Natural killer cell (primary cell): ENCODE measurements at regions of chr15 and their contacts with region 1.

Region 1: GRCh38 chr15:20409247-20409646 is 132.4 kb downstream of the GOLGA6L6 start:
- DNase-seq: no peak
- ATAC-seq: peak in 1 of 3 donors; percentile 35
- H3K4me3 ChIP-seq: no peak overlapping the region
- H3K4me3 Mint-ChIP-seq: no peak overlapping the region
- H3K27ac ChIP-seq: no peak overlapping the region
- H3K27ac Mint-ChIP-seq: no peak overlapping the region
- H3K4me1 ChIP-seq: no peaks in the 10 kb centered on the region
- H3K4me1 Mint-ChIP-seq: no peaks in the 10 kb centered on the region
- H3K27me3 ChIP-seq: no peaks in the 10 kb centered on the region
- H3K27me3 Mint-ChIP-seq: peaks cover 0 to under 1% of the 10 kb centered on the region in 2 donors
- CTCF ChIP-seq: no peak

Region 2: DNA sequence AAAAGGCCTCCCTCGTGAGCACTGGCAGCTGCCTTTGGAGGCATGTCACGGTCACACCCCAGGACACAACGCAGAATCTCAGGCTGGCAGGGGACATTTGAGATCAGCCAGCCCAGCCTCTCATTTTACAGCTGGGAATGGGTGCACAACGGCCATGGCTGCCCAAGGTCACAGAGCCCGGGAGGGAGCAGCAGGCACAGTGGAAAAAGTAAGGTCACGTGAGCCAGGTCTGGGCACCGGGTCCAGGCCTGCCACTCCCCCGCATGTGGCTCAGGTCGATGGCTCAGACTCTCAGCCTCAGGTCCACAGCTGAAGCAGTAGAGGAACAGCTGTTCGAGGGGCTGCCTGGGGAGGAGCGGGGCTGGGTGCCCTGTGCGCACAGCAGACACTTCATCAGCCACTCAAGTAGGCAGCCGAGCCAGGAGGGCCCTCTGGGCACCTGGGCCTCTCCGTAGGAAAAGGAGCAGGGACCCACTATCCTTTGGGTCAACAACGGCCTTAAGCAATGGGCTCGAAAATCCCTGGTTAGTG is 128.2 kb before region 1 on chr15:
- intact Hi-C with region 1: loop called (anchors 5 kb)
- DNase-seq: peak in 1 of 2 donors; percentile 25
- ATAC-seq: peak in 1 of 3 donors; percentile 22
- H3K4me3 ChIP-seq: no peak overlapping the region
- H3K4me3 Mint-ChIP-seq: no peak overlapping the region
- H3K27ac ChIP-seq: no peak overlapping the region
- H3K27ac Mint-ChIP-seq: no peak overlapping the region
- H3K4me1 ChIP-seq: no peaks in the 10 kb centered on the region
- H3K4me1 Mint-ChIP-seq: no peaks in the 10 kb centered on the region
- H3K27me3 ChIP-seq: no peaks in the 10 kb centered on the region
- H3K27me3 Mint-ChIP-seq: no peaks in the 10 kb centered on the region
- CTCF ChIP-seq: no peak

Region 3: GRCh38 chr15:20340931-20341661 is 68.2 kb before region 1 on chr15:
- intact Hi-C with region 1: loop called (anchors 10 kb)
- DNase-seq: peak; percentile 38 to 77
- ATAC-seq: peak in 2 of 3 donors; percentile 12 to 35
- H3K4me3 ChIP-seq: no peak overlapping the region
- H3K4me3 Mint-ChIP-seq: no peak overlapping the region
- H3K27ac ChIP-seq: no peak overlapping the region
- H3K27ac Mint-ChIP-seq: no peak overlapping the region
- H3K4me1 ChIP-seq: no peaks in the 10 kb centered on the region
- H3K4me1 Mint-ChIP-seq: no peaks in the 10 kb centered on the region
- H3K27me3 ChIP-seq: no peaks in the 10 kb centered on the region
- H3K27me3 Mint-ChIP-seq: no peaks in the 10 kb centered on the region
- CTCF ChIP-seq: no peak

Region 4: GRCh38 chr15:20361091-20361490 is 48.2 kb before region 1 on chr15:
- intact Hi-C with region 1: no loop called
- DNase-seq: no peak
- ATAC-seq: no peak
- H3K4me3 ChIP-seq: no peak overlapping the region
- H3K4me3 Mint-ChIP-seq: no peak overlapping the region
- H3K27ac ChIP-seq: no peak overlapping the region
- H3K27ac Mint-ChIP-seq: no peak overlapping the region
- H3K4me1 ChIP-seq: peaks cover 7% of the 10 kb centered on the region
- H3K4me1 Mint-ChIP-seq: peaks cover 6 to 13% of the 10 kb centered on the region in 2 donors
- H3K27me3 ChIP-seq: no peaks in the 10 kb centered on the region
- H3K27me3 Mint-ChIP-seq: no peaks in the 10 kb centered on the region
- CTCF ChIP-seq: no peak

Region 5: GRCh38 chr15:20386198-20386597 is 23.0 kb before region 1 on chr15:
- intact Hi-C with region 1: loop called (anchors 2 kb)
- DNase-seq: no peak
- ATAC-seq: peak in 1 of 3 donors; percentile 14
- H3K4me3 ChIP-seq: no peak overlapping the region
- H3K4me3 Mint-ChIP-seq: no peak overlapping the region
- H3K27ac ChIP-seq: no peak overlapping the region
- H3K27ac Mint-ChIP-seq: no peak overlapping the region
- H3K4me1 ChIP-seq: no peaks in the 10 kb centered on the region
- H3K4me1 Mint-ChIP-seq: no peaks in the 10 kb centered on the region
- H3K27me3 ChIP-seq: no peaks in the 10 kb centered on the region
- H3K27me3 Mint-ChIP-seq: no peaks in the 10 kb centered on the region
- CTCF ChIP-seq: no peak

Region 6: GRCh38 chr15:20665641-20666040 is 256.4 kb after region 1 on chr15:
- intact Hi-C with region 1: no loop called
- DNase-seq: no peak
- ATAC-seq: peak in 1 of 3 donors; percentile 45
- H3K4me3 ChIP-seq: no peak overlapping the region
- H3K4me3 Mint-ChIP-seq: no peak overlapping the region
- H3K27ac ChIP-seq: no peak overlapping the region
- H3K27ac Mint-ChIP-seq: no peak overlapping the region
- H3K4me1 ChIP-seq: no peaks in the 10 kb centered on the region
- H3K4me1 Mint-ChIP-seq: no peaks in the 10 kb centered on the region
- H3K27me3 ChIP-seq: peaks cover 5% of the 10 kb centered on the region
- H3K27me3 Mint-ChIP-seq: no peaks in the 10 kb centered on the region
- CTCF ChIP-seq: no peak